Heart left ventricle (tissue), 16 donors: ENCODE measurements at regions of chr7 and their contacts with region 1.

Region 1: GRCh38 chr7:56106108-56107073 is at the start of gene CHCHD2:
- DNase-seq: peak; percentile 96 to 99 (median 97)
- ATAC-seq: peak; percentile 99 to 100 (median 100)
- H3K4me3 ChIP-seq: peak within 1 kb of the TSS; percentile 56 to 98 (median 78)
- H3K27ac ChIP-seq: peak within 1 kb of the TSS; percentile 57 to 97 (median 88)
- H3K4me1 ChIP-seq: peaks cover 3 to 20% (median 11%) of the 10 kb centered on the region in 12 donors
- H3K27me3 ChIP-seq: peaks cover 0 to 4% (median 0%) of the 10 kb centered on the region in 9 donors
- CTCF ChIP-seq: no peak
- POLR2A ChIP-seq: peak; percentile 44 to 76
- total RNA-seq, gene CHCHD2: 368 to 511 (median 412) TPM

Region 2: DNA sequence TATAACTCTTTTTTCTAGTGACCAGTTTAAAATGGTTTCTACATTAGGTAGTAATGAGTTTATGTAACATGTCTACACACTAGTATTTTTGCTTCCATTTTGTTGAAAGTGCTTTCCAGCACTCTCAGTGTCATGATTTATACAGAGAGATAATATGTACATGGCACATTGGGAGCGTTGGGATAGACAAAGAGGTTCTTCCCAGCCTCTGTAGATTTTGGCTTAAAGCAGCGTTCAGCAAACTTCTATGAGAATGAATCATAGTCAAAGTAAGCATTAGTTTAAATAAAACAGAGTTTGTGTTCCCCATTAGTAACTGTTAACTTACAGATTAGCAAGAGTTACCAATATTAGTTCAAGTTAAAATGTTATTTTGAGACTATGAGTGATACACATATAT is 287.7 kb before region 1 on chr7:
- intact Hi-C with region 1: no loop called
- DNase-seq: no peak
- ATAC-seq: no peak
- H3K4me3 ChIP-seq: no peak overlapping the region
- H3K27ac ChIP-seq: no peak overlapping the region
- H3K4me1 ChIP-seq: no peaks in the 10 kb centered on the region
- H3K27me3 ChIP-seq: no peaks in the 10 kb centered on the region
- CTCF ChIP-seq: no peak
- POLR2A ChIP-seq: no peak

Region 3: GRCh38 chr7:55887821-55888247 is 218.6 kb before region 1 on chr7:
- intact Hi-C with region 1: loop called in 1 of 10 experiments (anchors 10 kb)
- DNase-seq: no peak
- ATAC-seq: no peak
- H3K4me3 ChIP-seq: peak overlapping the region in 11 of 12 donors; percentile 27 to 74 (median 59)
- H3K27ac ChIP-seq: peak overlapping the region in 11 of 12 donors; percentile 41 to 77 (median 64)
- H3K4me1 ChIP-seq: peaks cover 0 to 9% (median 2%) of the 10 kb centered on the region in 12 donors
- H3K27me3 ChIP-seq: no peaks in the 10 kb centered on the region
- CTCF ChIP-seq: no peak
- POLR2A ChIP-seq: no peak

Region 4: GRCh38 chr7:56051339-56052191 is 54.8 kb before region 1 on chr7 and contains the starts of genes CCT6A and PSPH:
- intact Hi-C with region 1: loop called in 1 of 10 experiments (anchors 5 kb)
- DNase-seq: peak; percentile 98 to 99 (median 99)
- ATAC-seq: peak; percentile 98 to 100 (median 100)
- H3K4me3 ChIP-seq: peak within 1 kb of the TSS; percentile 50 to 96 (median 82)
- H3K27ac ChIP-seq: peak within 1 kb of the TSS; percentile 80 to 96 (median 92)
- H3K4me1 ChIP-seq: peaks cover 7 to 45% (median 26%) of the 10 kb centered on the region in 12 donors
- H3K27me3 ChIP-seq: no peaks in the 10 kb centered on the region
- CTCF ChIP-seq: no peak
- POLR2A ChIP-seq: peak; percentile 23 to 81
- total RNA-seq, gene CCT6A: 44.6 to 85.8 (median 62.6) TPM
- total RNA-seq, gene PSPH: 7.5 to 15.9 (median 8.9) TPM

Region 5: GRCh38 chr7:56092789-56093531 is 13.4 kb before region 1 on chr7 and contains the start of gene PHKG1:
- intact Hi-C with region 1: loop called in 1 of 10 experiments (anchors 2 kb)
- DNase-seq: peak; percentile 86 to 90 (median 89)
- ATAC-seq: peak; percentile 81 to 93 (median 90)
- H3K4me3 ChIP-seq: peak within 1 kb of the TSS in 11 of 12 donors; percentile 25 to 56 (median 43)
- H3K27ac ChIP-seq: peak within 1 kb of the TSS; percentile 57 to 94 (median 85)
- H3K4me1 ChIP-seq: peaks cover 0 to 38% (median 18%) of the 10 kb centered on the region in 12 donors
- H3K27me3 ChIP-seq: no peaks in the 10 kb centered on the region
- CTCF ChIP-seq: peak; percentile 47 to 83 (median 72)
- POLR2A ChIP-seq: no peak
- total RNA-seq, gene PHKG1: 5.9 to 150 (median 19.9) TPM